ENCODE measurements at regions of chr12 and their contacts with region 1.

Region 1: GRCh38 chr12:87848248-87848868 is 180.8 kb downstream of the C12orf50 start:
- H3K4me3 Mint-ChIP-seq: no peak overlapping the region
- H3K27ac Mint-ChIP-seq: no peak overlapping the region
- H3K4me1 Mint-ChIP-seq: no peaks in the 10 kb centered on the region
- H3K27me3 Mint-ChIP-seq: peaks cover 1% of the 10 kb centered on the region

Region 2: GRCh38 chr12:85920324-85920947 is 1927.9 kb before region 1 on chr12:
- intact Hi-C with region 1: loop called (anchors 5 kb)
- H3K4me3 Mint-ChIP-seq: no peak overlapping the region
- H3K27ac Mint-ChIP-seq: no peak overlapping the region
- H3K4me1 Mint-ChIP-seq: no peaks in the 10 kb centered on the region
- H3K27me3 Mint-ChIP-seq: no peaks in the 10 kb centered on the region

Region 3: DNA sequence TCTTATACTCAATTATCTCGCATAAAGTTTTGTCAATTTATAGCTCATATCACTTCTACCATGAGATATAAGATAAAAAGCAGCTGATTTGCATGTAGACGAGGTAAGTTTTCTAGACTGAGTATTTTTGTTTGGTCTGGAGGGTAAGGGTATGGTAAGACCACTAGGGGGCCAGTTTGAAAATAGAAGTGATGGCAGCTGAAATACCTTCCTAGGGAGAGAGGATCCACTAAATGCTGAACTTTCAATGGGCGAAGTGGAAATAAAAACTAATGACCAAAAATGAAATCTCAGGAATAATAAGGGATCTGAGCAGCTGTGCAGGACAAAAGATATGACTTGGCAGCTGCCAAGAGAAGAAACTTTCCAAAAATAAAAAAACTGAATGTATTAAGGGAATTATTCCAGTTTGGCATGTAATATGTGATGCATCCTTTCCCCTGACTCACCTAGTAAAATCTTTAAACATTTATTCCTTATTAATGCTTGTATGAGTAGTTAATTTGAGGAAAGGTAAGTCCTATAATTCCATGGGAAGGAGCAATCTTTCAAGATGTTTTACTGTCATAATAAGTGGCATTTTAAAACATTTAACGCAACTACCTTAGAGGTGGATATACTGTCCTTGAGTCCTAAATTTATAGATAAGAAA is 573.6 kb before region 1 on chr12:
- intact Hi-C with region 1: loop called (anchors 10 kb)
- H3K4me3 Mint-ChIP-seq: no peak overlapping the region
- H3K27ac Mint-ChIP-seq: no peak overlapping the region
- H3K4me1 Mint-ChIP-seq: no peaks in the 10 kb centered on the region
- H3K27me3 Mint-ChIP-seq: no peaks in the 10 kb centered on the region

Measured in dendritic cell treated with granulocyte-macrophage colony-stimulating factor and Interleukin-4, amounts not matched to agents 40 ng/mL and 50 ng/mL, for 4 days (primary cell).